Sigmoid colon (tissue), 7 donors: ENCODE measurements at regions of chr2 and their contacts with region 1.

Region 1: DNA sequence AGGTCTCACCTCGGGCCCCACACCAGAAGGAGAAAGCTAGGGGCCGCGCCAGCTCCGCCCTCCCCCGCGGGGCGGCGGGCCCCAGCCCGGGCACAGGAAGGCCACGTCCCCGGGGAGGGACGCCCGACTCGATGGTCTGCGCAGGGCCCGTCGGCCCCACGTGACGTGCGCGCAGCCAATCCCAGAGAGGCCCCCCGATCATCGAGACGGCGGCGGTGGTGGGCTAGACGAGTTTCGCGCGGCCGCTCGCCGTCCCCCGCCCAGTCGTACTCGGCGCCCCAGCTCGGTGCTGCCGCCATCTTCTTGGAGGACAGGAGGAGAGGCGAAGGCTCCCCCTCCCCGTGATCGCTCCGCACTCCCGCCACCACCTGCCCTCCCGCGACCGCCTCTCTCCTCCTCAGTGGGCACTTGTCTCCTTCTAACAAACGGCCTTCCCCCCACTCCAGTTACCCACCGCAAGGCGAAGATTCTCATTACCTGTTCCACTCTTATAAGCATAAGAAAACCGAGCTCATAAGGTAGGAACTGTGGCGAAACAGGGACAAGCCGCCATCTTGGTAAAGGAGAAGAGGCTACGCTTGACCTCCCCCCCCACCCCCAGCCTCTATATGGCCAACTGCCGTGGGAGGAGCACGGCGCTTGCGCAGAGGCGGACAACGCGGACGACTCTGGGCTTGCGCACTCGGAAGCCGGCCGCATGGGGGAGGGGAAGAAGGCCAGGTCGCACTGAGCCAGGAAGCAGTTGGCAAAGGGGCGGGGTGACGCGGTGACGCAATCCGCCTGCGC is at the start of gene HDLBP:
- DNase-seq: peak; percentile 99
- H3K4me3 ChIP-seq: peak within 1 kb of the TSS; percentile 73 to 93 (median 89)
- H3K27ac ChIP-seq: peak within 1 kb of the TSS; percentile 97 to 99 (median 98)
- H3K4me1 ChIP-seq: peaks cover 0 to 69% (median 55%) of the 10 kb centered on the region in 4 donors
- H3K27me3 ChIP-seq: no peaks in the 10 kb centered on the region
- CTCF ChIP-seq: no peak
- EP300 ChIP-seq: peak in 1 of 4 donors; percentile 80
- POLR2A ChIP-seq: peak; percentile 52 to 69
- total RNA-seq, gene HDLBP: 201 to 281 (median 247) TPM

Region 2: DNA sequence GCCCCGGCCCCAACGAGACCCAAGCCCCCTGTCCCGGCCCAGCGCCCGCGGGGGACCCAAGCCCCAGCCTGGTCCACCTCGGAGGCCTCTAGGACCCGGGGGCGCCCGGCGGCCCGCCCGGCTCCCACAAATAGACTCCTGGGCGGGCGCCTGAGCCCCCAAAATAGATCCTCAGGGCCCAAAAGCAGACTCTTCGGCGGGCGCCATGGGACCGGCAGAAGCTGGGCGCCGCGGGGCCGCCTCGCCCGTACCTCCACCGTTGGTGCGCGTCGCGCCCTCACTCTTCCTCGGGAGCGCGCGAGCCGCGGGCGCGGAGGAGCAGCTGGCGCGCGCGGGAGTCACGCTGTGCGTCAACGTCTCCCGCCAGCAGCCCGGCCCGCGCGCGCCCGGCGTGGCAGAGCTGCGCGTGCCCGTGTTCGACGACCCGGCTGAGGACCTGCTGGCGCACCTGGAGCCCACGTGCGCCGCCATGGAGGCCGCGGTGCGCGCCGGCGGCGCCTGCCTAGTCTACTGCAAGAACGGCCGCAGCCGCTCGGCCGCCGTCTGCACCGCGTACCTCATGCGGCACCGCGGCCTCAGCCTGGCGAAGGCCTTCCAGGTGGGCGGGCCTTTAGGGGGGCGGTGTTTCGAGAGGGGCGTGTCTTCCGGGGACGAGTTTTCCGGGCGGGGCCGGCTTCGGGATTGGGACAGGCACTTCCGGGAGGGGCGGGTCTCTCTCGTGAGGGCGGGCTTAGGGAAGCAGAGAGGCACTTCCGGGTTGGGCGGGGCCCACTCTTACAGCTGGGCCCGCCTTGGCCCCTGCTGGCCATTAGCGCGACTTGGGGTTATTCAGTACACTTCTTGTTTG is 754.6 kb before region 1 on chr2:
- intact Hi-C with region 1: loop called (anchors 10 kb)
- DNase-seq: peak; percentile 100
- H3K4me3 ChIP-seq: peak overlapping the region; percentile 68 to 93 (median 85)
- H3K27ac ChIP-seq: peak overlapping the region; percentile 97 to 100 (median 100)
- H3K4me1 ChIP-seq: peaks cover 2 to 52% (median 43%) of the 10 kb centered on the region in 4 donors
- H3K27me3 ChIP-seq: peaks cover 0 to 19% (median 0%) of the 10 kb centered on the region in 3 donors
- CTCF ChIP-seq: peak in 2 of 4 experiments; percentile 33 to 53
- EP300 ChIP-seq: no peak
- POLR2A ChIP-seq: peak; percentile 6 to 86

Region 3: GRCh38 chr2:240913810-240914644 is 401.3 kb before region 1 on chr2:
- intact Hi-C with region 1: no loop called
- DNase-seq: peak; percentile 76
- H3K4me3 ChIP-seq: no peak overlapping the region
- H3K27ac ChIP-seq: no peak overlapping the region
- H3K4me1 ChIP-seq: peaks cover 0 to 25% (median 14%) of the 10 kb centered on the region in 4 donors
- H3K27me3 ChIP-seq: peaks cover 8 to 51% (median 24%) of the 10 kb centered on the region in 3 donors
- CTCF ChIP-seq: peak in 3 of 4 experiments; percentile 43 to 68 (median 54)
- EP300 ChIP-seq: no peak
- POLR2A ChIP-seq: no peak

Region 4: GRCh38 chr2:241102239-241102803 is 213.0 kb before region 1 on chr2 and contains the start of gene MTERF4:
- intact Hi-C with region 1: no loop called
- DNase-seq: peak; percentile 93
- H3K4me3 ChIP-seq: peak within 1 kb of the TSS; percentile 72 to 87 (median 84)
- H3K27ac ChIP-seq: peak within 1 kb of the TSS; percentile 82 to 88 (median 86)
- H3K4me1 ChIP-seq: peaks cover 0 to 22% (median 20%) of the 10 kb centered on the region in 4 donors
- H3K27me3 ChIP-seq: no peaks in the 10 kb centered on the region
- CTCF ChIP-seq: no peak
- EP300 ChIP-seq: no peak
- POLR2A ChIP-seq: peak in 1 of 2 donors; percentile 27
- total RNA-seq, gene MTERF4: 18.9 to 47.9 (median 33.2) TPM

Region 5: DNA sequence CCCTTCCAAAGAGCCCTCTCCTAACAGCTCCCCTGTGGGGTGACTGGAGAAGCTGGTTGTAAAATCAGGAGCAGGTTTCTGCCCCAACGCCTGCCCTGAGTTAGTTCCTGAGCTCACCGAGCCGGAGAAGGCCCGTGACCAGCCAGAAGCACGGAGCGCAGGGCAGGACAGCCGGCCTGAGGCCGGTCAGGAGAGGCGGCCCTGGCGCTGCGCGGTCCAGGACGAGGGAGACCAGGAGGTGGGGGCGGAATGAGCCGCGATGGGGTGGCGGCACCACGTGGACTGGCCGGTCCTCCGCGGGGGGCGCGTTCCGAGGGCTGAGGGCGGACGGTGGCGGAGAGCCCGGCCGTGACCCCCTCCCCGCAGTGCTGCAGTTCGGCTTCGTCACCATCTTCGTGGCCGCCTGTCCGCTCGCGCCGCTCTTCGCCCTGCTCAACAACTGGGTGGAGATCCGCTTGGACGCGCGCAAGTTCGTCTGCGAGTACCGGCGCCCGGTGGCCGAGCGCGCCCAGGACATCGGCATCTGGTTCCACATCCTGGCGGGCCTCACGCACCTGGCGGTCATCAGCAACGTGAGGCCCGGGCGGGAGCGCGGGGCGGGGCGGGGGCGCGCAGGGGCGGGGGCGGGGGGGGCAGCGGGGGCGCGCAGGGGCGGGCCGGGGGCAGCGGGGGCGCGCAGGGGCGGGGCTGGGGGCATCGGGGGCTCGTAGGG is 97.8 kb before region 1 on chr2:
- intact Hi-C with region 1: loop called (anchors 5 kb)
- DNase-seq: peak; percentile 87
- H3K4me3 ChIP-seq: peak overlapping the region; percentile 36 to 54 (median 48)
- H3K27ac ChIP-seq: peak overlapping the region; percentile 80 to 89 (median 83)
- H3K4me1 ChIP-seq: peaks cover 0 to 18% (median 11%) of the 10 kb centered on the region in 4 donors
- H3K27me3 ChIP-seq: no peaks in the 10 kb centered on the region
- CTCF ChIP-seq: no peak
- EP300 ChIP-seq: no peak
- POLR2A ChIP-seq: no peak

Region 6: GRCh38 chr2:241271641-241272297 is 43.5 kb before region 1 on chr2:
- intact Hi-C with region 1: loop called (anchors 1 kb)
- DNase-seq: peak; percentile 93
- H3K4me3 ChIP-seq: peak overlapping the region; percentile 86 to 100 (median 94)
- H3K27ac ChIP-seq: peak overlapping the region; percentile 97 to 99 (median 98)
- H3K4me1 ChIP-seq: peaks cover 0 to 44% (median 31%) of the 10 kb centered on the region in 4 donors
- H3K27me3 ChIP-seq: no peaks in the 10 kb centered on the region
- CTCF ChIP-seq: no peak
- EP300 ChIP-seq: no peak
- POLR2A ChIP-seq: no peak

Region 7: DNA sequence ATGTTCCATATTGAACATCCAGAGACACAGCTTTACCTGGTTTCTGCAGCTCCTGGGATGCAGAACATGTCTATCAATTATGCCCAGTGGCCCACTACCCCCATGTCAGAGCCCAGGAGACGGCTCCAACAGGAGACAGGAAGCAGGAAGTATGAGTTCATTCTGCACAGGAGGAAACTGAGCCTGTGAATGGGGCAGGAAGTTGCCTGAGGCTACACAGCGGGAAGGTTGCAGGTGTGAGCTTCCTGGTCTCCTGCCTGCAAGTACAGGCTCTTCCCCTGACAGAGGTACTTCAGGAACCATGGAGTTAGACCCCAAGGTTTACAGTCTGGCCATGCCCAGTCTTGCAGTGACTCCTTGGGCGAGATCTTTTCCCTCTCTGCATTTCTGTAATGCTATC is 240.4 kb after region 1 on chr2:
- intact Hi-C with region 1: no loop called
- DNase-seq: no peak
- H3K4me3 ChIP-seq: no peak overlapping the region
- H3K27ac ChIP-seq: no peak overlapping the region
- H3K4me1 ChIP-seq: peaks cover 0 to 31% (median 26%) of the 10 kb centered on the region in 4 donors
- H3K27me3 ChIP-seq: no peaks in the 10 kb centered on the region
- CTCF ChIP-seq: no peak
- EP300 ChIP-seq: no peak
- POLR2A ChIP-seq: no peak

Region 8: DNA sequence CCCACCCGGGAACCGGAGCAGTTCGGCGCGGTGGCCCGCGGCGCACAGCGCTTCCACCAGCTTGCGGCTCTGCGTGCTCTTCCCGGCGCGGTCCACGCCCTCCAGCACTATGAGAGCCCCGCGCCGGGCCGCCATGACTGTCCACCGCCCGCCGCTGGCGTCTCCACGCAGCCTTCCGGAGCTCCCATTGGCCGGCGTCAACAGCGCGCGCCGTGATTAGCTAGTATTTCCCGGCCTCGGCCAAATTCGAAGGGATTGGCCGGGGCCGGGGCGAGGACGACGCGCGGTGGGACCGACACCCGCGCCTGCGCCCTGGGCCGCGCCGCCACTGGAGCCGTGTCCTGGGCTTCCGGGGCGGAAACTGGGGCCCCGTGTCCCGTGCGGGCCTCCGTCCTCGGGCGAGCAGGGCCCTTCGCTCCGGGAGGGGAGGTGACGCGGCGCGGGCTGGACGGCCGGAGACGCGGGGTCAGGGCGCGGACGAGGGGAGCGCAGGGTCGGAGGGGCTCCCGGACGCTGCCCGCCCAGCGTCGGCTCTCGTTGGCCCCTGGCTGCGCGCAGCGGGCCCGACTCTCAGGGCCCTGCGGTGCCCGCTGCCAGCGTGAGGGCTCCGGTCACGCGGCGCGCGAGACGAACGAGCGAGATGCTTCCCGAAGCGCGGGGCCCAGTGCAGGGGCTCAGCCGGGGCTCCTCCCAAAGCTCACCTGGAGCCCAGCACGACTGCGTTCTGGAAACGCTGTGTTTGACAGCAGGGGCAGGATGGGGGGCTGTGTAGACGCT is 371.6 kb after region 1 on chr2 and contains the start of gene DTYMK:
- intact Hi-C with region 1: loop called (anchors 5 kb)
- DNase-seq: peak; percentile 98
- H3K4me3 ChIP-seq: peak within 1 kb of the TSS; percentile 79 to 95 (median 84)
- H3K27ac ChIP-seq: peak within 1 kb of the TSS; percentile 93 to 95 (median 94)
- H3K4me1 ChIP-seq: peaks cover 0 to 34% (median 25%) of the 10 kb centered on the region in 4 donors
- H3K27me3 ChIP-seq: no peaks in the 10 kb centered on the region
- CTCF ChIP-seq: no peak
- EP300 ChIP-seq: no peak
- POLR2A ChIP-seq: peak; percentile 18 to 37
- total RNA-seq, gene DTYMK: 7.4 to 13.8 (median 10.8) TPM